Activated naive CD4-positive, alpha-beta T cell treated with anti-CD3 and anti-CD28 coated beads for 36 hours (primary cell): ENCODE measurements at regions of chr1 and their contacts with region 1.

Region 1: GRCh38 chr1:115062542-115063011 is 26.7 kb downstream of the TSPAN2 start:
- DNase-seq: peak; percentile 96
- H3K4me3 Mint-ChIP-seq: no peak overlapping the region
- H3K27ac Mint-ChIP-seq: peak overlapping the region; percentile 74
- H3K4me1 Mint-ChIP-seq: peaks cover 41% of the 10 kb centered on the region
- H3K27me3 Mint-ChIP-seq: no peaks in the 10 kb centered on the region

Region 2: DNA sequence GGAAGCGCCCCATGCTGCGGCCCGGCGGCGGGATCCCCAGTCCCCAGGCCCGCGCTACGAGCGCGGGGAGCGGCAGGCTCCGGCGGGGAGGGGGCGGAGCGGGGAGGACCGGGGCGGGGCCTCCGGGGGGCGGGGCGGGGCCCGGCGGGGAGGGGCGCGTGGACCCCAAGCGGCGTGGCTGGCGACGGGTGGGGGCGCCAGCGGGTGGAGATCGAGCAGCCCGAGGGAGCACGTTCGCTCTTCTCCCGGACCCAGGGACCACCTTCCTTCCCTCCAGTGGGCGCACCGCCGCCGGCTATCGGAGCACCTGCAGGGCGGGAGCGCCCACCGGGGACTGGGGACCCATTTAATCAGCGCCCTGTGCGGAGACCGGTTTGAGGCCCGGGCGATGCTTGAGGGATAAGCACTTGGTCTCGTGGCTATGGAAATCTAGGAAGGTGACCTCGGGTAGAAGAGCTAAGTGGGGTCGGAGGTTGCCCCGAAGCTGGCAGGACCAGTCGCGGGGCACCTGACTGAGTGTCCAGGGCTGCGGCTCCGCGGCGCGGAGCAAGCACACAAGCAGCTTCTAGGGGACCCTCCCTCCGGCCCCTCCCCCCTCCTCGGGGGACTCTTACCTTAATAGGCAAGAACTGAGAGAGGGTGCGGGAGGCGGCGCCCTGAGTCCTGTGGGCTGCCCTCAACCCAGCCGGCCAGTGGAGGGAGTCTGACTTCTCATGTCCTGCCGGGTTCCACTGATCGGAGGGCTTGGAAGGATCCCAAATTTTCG is 27.0 kb after region 1 on chr1 and contains the start of gene TSPAN2:
- CTCF ChIA-PET with region 1: no interaction called
- intact Hi-C with region 1: loop called (anchors 2 kb)
- DNase-seq: peak; percentile 41
- H3K4me3 Mint-ChIP-seq: peak within 1 kb of the TSS; percentile 70
- H3K27ac Mint-ChIP-seq: no peak within 1 kb of the TSS
- H3K4me1 Mint-ChIP-seq: peaks cover 38% of the 10 kb centered on the region
- H3K27me3 Mint-ChIP-seq: no peaks in the 10 kb centered on the region
- total RNA-seq, gene TSPAN2: 0.86 to 0.91 TPM

Region 3: GRCh38 chr1:115098979-115099692 is 36.6 kb after region 1 on chr1:
- CTCF ChIA-PET with region 1: no interaction called
- intact Hi-C with region 1: loop called (anchors 1 kb)
- DNase-seq: peak; percentile 76
- H3K4me3 Mint-ChIP-seq: peak overlapping the region; percentile 78
- H3K27ac Mint-ChIP-seq: peak overlapping the region; percentile 57
- H3K4me1 Mint-ChIP-seq: peaks cover 30% of the 10 kb centered on the region
- H3K27me3 Mint-ChIP-seq: no peaks in the 10 kb centered on the region

Region 4: GRCh38 chr1:115112496-115113375 is 50.2 kb after region 1 on chr1:
- CTCF ChIA-PET with region 1: interaction called, 3 read pairs
- intact Hi-C with region 1: loop called (anchors 2 kb)
- DNase-seq: peak; percentile 55
- H3K4me3 Mint-ChIP-seq: no peak overlapping the region
- H3K27ac Mint-ChIP-seq: no peak overlapping the region
- H3K4me1 Mint-ChIP-seq: peaks cover 8% of the 10 kb centered on the region
- H3K27me3 Mint-ChIP-seq: no peaks in the 10 kb centered on the region

Region 5: DNA sequence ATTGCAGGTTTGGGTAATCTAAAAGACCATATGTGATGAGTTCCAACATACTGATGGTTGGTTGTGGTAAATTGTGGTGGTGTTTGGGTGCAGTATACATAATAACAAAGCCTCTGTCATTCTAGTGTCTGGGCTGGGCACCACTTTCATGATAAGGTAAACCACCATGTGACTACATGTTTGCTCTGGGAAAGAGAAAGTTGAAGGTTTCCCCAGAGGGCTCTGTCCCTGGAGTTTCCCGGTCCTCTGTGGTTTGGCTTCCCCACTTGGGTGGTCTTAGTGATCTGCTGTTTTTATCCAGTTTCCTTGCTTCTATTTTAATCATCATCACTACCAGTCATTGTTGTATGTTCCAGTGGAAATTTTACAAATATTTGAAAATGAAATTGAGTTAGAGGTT is 82.6 kb after region 1 on chr1:
- CTCF ChIA-PET with region 1: no interaction called
- intact Hi-C with region 1: no loop called
- DNase-seq: no peak
- H3K4me3 Mint-ChIP-seq: no peak overlapping the region
- H3K27ac Mint-ChIP-seq: no peak overlapping the region
- H3K4me1 Mint-ChIP-seq: peaks cover 4% of the 10 kb centered on the region
- H3K27me3 Mint-ChIP-seq: peaks cover 32% of the 10 kb centered on the region

Region 6: DNA sequence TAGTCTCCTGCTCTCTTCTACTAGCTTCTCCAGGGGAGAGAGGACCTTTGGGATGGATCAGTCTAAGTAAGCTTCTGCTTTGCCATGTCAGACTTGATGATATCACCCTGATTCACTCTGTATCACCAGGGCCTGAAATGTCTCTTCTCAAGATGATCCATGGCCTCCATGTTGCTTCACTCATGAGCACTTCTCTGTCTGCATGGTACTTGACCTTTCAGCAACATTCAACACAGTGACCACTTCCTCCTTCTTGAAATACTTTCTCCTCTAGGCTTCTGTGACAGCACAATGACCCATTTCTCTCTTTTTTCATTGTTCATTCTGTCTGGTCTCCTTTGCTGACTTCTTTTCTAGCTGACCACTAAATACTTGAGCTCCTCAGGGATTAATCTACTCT is 310.7 kb after region 1 on chr1:
- CTCF ChIA-PET with region 1: no interaction called
- intact Hi-C with region 1: no loop called
- DNase-seq: no peak
- H3K4me3 Mint-ChIP-seq: no peak overlapping the region
- H3K27ac Mint-ChIP-seq: no peak overlapping the region
- H3K4me1 Mint-ChIP-seq: no peaks in the 10 kb centered on the region
- H3K27me3 Mint-ChIP-seq: peaks cover under 1% of the 10 kb centered on the region